CD4-positive, alpha-beta memory T cell (primary cell): ENCODE measurements at regions of chr16 and their contacts with region 1.

Region 1: DNA sequence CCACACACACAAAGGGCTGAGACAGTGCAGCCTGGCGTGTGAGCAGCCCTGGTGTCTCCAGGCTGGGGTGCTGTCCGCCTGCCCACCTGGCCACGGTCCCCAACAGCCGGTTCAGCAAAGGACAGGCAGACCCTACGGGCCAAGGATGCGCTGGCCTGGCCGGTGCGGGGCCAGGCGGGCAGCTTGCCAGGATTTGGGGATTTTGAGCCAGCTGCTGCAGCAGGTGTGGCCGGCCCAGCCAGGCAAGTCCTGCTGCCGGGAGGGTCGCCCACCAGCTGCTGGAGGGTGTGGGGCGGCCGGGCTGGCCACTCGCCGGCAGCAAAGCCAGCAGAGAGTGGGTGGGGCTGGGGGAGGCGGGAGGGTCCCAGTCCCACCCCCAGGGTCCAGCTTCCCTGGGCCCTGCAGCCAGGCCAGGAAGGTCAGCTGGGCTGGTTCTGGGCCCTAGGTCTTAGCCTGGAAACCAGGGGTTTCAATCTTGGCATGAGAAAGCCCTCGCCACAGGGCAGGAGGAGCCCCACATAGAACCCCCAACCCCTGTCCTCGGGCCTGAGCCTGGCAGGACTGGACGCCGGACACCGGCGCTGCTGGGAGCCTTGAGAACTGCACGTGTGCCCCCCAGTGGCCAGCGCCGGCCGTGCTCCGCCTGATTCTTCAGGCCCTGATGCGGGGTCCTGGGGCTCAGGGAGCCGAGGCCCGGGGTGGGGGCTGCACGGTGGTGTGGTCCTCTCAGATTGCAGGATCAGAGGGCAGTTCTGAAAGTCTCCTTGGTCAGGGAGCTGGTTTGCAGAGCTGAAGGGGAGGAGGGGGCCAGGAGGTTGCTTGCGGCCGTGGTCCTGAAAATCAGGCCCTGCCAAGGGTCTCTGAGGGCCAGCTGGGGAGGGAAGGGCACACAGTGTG is 17.6 kb upstream of the SSTR5 start:
- DNase-seq: peak in 2 of 5 donors; percentile 7 to 10
- H3K4me3 ChIP-seq: no peak overlapping the region
- H3K4me3 Mint-ChIP-seq: no peak overlapping the region
- H3K27ac ChIP-seq: no peak overlapping the region
- H3K27ac Mint-ChIP-seq: no peak overlapping the region
- H3K4me1 ChIP-seq: no peaks in the 10 kb centered on the region
- H3K4me1 Mint-ChIP-seq: no peaks in the 10 kb centered on the region
- H3K27me3 ChIP-seq: no peaks in the 10 kb centered on the region
- H3K27me3 Mint-ChIP-seq: no peaks in the 10 kb centered on the region

Region 2: GRCh38 chr16:877991-878784 is 176.7 kb before region 1 on chr16:
- CTCF ChIA-PET with region 1: no interaction called
- POLR2A ChIA-PET with region 1: no interaction called
- intact Hi-C with region 1: no loop called
- DNase-seq: peak in 3 of 5 donors; percentile 12 to 21 (median 15)
- H3K4me3 ChIP-seq: no peak overlapping the region
- H3K4me3 Mint-ChIP-seq: no peak overlapping the region
- H3K27ac ChIP-seq: no peak overlapping the region
- H3K27ac Mint-ChIP-seq: no peak overlapping the region
- H3K4me1 ChIP-seq: no peaks in the 10 kb centered on the region
- H3K4me1 Mint-ChIP-seq: peaks cover 0 to 4% (median under 1%) of the 10 kb centered on the region in 4 donors
- H3K27me3 ChIP-seq: no peaks in the 10 kb centered on the region
- H3K27me3 Mint-ChIP-seq: no peaks in the 10 kb centered on the region

Region 3: GRCh38 chr16:1042866-1043265 is 12.0 kb before region 1 on chr16:
- CTCF ChIA-PET with region 1: interaction called, 11 read pairs
- POLR2A ChIA-PET with region 1: no interaction called
- intact Hi-C with region 1: no loop called
- DNase-seq: no peak
- H3K4me3 ChIP-seq: no peak overlapping the region
- H3K4me3 Mint-ChIP-seq: no peak overlapping the region
- H3K27ac ChIP-seq: no peak overlapping the region
- H3K27ac Mint-ChIP-seq: no peak overlapping the region
- H3K4me1 ChIP-seq: no peaks in the 10 kb centered on the region
- H3K4me1 Mint-ChIP-seq: peaks cover 0 to 3% (median 0%) of the 10 kb centered on the region in 4 donors
- H3K27me3 ChIP-seq: no peaks in the 10 kb centered on the region
- H3K27me3 Mint-ChIP-seq: peaks cover 0 to 4% of the 10 kb centered on the region in 2 donors

Region 4: DNA sequence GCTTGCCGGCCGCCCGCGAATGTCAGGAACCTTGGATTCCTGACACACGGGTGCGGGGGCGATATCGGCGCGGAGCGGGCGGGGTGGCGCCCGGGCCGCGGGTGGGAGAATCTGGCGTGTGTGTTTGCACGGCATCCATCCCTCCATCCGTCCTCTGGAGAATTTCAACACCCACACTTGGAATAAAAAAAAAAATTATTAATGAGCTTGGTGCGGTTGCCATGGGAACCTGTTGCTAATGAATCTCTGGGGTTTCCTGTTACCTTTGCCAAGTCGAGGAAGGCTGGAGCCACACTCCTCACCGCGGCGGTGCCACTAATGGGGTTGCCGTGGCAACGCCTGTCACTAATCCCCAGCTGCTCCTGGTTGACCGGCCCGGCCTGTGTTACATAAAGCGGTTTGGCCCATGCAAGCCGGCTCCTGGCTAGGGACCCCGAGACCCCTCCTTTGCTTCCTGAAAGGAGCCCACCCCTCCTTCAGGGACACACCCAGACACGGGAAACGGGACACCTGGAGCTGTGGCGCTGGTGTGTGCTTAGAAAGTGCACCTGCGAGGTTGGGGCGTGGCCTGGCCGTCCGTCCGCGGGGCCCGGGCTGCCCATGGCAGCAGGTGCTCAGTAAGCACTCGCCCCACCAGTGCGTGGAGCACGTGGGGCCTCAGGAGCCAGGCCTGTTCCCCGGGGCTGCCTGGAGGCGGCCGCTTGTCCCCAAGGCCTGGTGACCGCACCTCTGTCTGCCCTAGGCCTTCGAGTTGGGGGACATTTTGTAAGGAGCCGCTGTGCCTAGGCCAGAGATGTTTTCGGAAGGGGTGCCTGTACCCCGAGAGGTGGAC is 112.6 kb after region 1 on chr16:
- CTCF ChIA-PET with region 1: no interaction called
- POLR2A ChIA-PET with region 1: no interaction called
- intact Hi-C with region 1: no loop called
- DNase-seq: no peak
- H3K4me3 ChIP-seq: no peak overlapping the region
- H3K4me3 Mint-ChIP-seq: no peak overlapping the region
- H3K27ac ChIP-seq: no peak overlapping the region
- H3K27ac Mint-ChIP-seq: no peak overlapping the region
- H3K4me1 ChIP-seq: no peaks in the 10 kb centered on the region
- H3K4me1 Mint-ChIP-seq: no peaks in the 10 kb centered on the region
- H3K27me3 ChIP-seq: no peaks in the 10 kb centered on the region
- H3K27me3 Mint-ChIP-seq: peaks cover 1 to 4% of the 10 kb centered on the region in 2 donors